ENCODE measurements at regions of chr22 and their contacts with region 1.

Region 1: DNA sequence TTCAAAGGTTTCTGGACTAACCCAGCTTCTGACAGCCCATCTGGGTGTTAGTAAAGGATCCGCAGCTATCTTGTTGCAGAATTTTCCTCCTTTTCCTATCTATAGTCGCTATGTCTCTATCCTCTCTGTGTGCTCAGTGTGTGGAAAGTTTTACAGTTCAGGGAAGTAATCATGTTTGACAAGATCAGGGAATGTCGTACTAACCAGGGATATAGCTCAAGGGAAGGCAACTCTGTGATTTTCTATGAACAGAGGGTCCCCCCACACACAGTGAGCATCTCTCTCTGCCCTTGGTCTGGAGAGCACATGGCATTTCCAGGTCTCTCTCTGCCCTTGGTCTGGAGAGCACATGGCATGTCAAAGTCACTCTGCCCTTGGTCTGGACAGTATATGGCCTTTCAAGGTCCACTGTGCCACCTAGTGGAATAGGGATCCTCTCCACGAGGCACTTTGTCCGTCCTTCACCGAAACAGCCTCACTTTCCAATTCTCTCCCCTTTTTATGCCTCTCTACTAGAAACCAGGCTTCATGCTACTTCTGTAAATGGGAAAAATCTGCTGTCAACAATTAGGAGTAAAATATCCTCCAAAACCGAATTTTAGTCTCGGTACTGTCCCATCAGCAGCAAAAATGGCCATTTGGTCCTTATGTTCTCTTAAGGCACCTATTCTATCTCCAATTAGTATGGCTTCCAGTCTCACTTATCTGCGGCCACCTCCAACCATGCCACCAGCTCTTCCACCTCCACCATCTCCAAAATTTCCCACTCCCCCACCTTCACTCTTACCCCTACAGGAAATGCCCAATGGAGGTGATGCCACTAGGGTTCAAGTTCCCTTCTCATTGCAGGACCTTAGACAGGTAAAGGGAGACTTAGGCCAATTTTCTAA is 88.7 kb downstream of the IGLL5 start:
- DNase-seq: no peak
- ATAC-seq: no peak

Region 2: DNA sequence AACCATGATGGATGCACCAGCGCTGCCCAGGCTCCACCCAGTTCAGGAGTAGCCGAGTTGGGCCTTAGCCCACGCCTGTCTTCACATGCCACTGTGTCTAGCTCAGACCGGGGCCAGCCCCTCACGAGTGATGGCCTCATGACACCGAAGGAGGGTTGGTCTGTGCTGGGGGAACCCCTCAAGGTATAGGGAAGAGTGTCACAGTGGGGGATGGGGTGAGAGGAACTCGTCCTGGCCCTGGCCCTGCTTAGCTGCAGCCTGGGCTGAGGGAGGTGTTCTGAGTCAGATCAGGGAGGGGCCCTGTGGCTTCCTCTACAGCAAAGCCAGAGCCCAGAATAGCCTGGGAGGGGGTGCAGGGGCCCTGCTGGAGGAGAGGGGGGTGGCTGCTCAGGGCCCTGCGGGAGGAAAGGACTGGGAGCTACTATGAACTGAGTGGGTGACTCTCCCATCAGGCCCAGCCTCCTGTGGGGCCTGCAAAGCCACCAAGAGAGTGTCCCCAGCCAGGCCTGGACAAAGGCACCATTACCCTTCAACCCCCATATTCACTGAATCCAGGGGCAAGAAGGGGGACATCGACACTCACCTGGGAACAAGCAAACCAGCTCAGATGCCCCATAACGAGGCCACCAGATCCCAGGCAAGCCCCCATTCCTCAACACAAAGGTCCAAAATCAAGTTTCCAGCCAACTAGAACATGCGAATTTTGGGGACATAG is 47.5 kb before region 1 on chr22:
- intact Hi-C with region 1: no loop called
- DNase-seq: no peak
- ATAC-seq: peak; percentile 60

Region 3: DNA sequence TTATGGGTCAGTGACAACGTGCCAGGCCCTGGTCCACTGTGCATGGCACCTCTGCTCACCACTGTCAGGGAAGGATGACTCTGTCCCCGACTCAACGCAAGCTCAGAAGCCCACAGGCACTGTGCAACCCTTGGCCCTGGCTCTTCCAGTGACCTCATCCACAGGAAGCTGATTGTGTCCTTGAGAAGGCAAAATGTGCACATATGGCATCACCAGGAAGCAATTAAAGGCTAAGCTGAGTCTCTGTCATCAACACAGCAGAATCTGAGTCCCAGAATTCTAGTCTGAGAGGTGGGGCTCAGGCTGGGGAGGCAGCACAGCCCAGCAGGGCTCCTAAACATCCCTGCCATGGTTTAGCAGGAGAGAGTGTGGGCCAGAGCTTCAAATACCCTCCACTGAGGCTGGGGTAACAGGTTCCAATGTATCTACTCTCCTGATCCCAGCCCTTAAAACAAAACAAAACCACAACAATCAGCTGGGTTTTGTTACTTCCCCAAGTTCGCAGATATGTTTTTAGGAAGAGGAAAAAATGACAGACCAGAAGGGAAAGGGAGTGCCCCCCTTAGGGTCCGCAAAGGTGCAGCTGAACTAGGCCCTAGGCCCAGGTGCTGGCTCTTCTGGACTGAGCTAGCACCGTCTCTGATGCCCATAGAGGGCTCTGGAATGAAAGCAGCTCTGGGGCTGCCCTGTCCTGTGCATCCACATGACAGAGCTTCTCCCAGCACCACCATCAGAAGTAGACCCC is 60.6 kb after region 1 on chr22:
- intact Hi-C with region 1: loop called (anchors 10 kb)
- DNase-seq: no peak
- ATAC-seq: no peak

Region 4: GRCh38 chr22:23128269-23129108 is 152.2 kb after region 1 on chr22:
- intact Hi-C with region 1: loop called (anchors 5 kb)
- DNase-seq: peak; percentile 69
- ATAC-seq: peak; percentile 93

Measured in Right ventricle myocardium superior (tissue), 1 donor.